ENCODE measurements at regions of chr19 and their contacts with region 1.

Region 1: GRCh38 chr19:40305403-40305802 is 20.3 kb upstream of the AKT2 start:
- DNase-seq: peak; percentile 85 to 90
- ATAC-seq: peak; percentile 78
- H3K4me3 ChIP-seq: no peak overlapping the region
- H3K27ac ChIP-seq: no peak overlapping the region
- H3K4me1 ChIP-seq: no peaks in the 10 kb centered on the region
- H3K27me3 ChIP-seq: no peaks in the 10 kb centered on the region

Region 2: DNA sequence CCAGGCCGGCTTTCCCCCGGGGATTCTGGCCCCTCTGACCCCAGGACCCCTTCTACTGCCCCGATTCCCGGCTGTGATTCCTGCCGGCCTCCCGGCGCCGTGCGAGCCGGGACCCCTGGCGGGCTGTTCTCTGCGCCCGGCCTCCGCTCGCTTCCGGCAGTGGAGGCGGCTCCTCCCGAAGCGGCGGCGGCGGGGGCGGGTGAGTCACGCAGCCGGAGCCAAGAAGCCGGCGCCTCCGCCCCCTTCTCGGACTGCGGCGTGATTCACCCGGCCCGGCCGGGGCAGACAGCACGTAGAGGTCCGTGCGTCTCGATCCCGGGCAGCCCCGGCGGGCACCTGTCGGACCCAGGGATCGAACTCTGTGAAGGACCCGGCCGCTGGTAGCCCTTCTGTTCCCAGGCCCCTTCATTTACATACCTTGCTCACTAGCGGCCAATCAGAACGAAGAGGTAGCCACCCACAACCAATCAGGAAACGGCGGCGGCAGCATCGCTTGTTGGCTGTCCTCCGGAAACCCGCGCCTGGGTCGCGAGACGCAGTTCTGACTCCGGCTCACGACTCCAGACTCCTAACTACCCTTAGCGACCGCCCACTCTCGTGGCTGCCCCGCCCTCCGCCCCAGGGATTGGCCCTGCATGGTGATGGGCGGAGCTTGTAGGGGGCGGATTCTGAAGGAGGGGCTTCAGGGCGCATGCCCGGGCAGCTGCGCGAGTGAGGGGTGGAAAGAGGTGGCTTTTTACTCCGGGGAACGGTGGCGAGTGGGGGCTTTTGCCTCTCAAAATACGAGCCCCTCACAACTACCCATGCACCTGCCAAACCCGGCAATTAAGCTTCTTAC is 120.3 kb after region 1 on chr19 and contains the start of gene SERTAD1:
- intact Hi-C with region 1: loop called in 1 of 2 experiments (anchors 10 kb)
- DNase-seq: peak; percentile 99 to 100
- ATAC-seq: peak; percentile 96
- H3K4me3 ChIP-seq: peak within 1 kb of the TSS; percentile 74 to 88
- H3K27ac ChIP-seq: peak within 1 kb of the TSS; percentile 99 to 100
- H3K4me1 ChIP-seq: no peaks in the 10 kb centered on the region
- H3K27me3 ChIP-seq: no peaks in the 10 kb centered on the region
- total RNA-seq, gene SERTAD1: 19.7 to 27.8 TPM

Region 3: DNA sequence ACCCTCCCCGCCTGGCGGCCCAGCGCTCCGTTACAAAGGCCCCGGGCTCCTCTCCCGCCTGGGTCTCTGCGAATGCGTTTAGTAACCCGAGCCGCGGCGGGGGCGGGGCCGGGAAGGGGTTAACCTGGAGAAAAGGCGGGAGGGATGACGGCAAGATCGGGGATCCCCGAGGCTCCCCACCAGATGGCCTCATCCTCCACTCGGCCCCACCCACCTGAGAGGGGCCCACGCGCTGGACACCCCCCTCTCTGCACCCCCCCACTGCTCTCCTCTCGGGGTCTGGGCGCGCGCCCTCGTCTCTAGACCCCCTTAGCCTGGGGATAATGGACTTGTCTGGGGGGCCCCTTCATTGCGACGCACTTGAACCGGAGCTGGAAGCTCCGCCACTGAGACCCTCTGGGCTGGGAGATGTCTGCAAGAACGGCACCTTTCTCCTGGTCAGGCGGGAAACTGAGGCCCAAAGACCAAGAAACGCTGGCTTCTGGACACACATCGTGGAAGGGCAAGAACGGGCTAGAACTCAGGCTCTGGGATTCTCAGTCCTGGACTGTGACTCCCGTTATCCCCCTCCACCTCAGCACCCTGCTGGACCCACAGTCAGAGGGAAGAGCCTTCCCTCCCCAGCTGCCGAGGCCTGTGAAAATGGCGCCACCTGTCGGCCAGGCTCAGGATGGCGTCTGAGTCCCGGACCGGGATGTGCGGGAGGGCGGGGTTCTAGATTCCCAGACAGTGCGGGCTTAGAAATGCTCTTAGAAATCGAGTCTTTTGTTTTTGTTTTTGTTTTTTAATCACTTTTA is 292.9 kb after region 1 on chr19:
- intact Hi-C with region 1: loop called in 1 of 2 experiments (anchors 5 kb)
- DNase-seq: peak; percentile 91 to 97
- ATAC-seq: peak; percentile 84
- H3K4me3 ChIP-seq: no peak overlapping the region
- H3K27ac ChIP-seq: no peak overlapping the region
- H3K4me1 ChIP-seq: no peaks in the 10 kb centered on the region
- H3K27me3 ChIP-seq: no peaks in the 10 kb centered on the region

Region 4: DNA sequence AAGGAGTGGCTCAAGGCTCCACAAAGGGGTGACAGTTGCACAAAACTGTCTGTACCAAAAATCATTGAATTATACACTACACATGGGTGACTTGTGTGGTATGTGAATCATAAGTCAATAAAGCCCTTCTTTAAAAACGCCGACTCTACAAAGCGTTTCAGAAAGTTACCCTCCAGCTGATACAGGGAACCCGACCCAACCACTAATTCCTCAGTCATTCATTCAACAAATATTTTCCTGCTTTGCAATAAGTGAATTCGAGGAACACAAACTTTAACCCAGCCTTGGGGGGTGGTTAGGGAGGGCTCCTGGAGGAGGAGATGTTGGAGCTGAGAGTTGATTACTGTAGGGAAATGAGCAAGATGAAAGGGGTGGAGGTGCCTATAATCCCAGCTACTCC is 327.8 kb after region 1 on chr19:
- intact Hi-C with region 1: loop called in 1 of 2 experiments (anchors 10 kb)
- DNase-seq: no peak
- ATAC-seq: no peak
- H3K4me3 ChIP-seq: no peak overlapping the region
- H3K27ac ChIP-seq: peak overlapping the region in 1 of 2 donors; percentile 19
- H3K4me1 ChIP-seq: no peaks in the 10 kb centered on the region
- H3K27me3 ChIP-seq: no peaks in the 10 kb centered on the region

Measured in aorta (tissue), 5 donors.